Endothelial cell of umbilical vein (primary cell): ENCODE measurements at regions of chr11 and their contacts with region 1.

Region 1: DNA sequence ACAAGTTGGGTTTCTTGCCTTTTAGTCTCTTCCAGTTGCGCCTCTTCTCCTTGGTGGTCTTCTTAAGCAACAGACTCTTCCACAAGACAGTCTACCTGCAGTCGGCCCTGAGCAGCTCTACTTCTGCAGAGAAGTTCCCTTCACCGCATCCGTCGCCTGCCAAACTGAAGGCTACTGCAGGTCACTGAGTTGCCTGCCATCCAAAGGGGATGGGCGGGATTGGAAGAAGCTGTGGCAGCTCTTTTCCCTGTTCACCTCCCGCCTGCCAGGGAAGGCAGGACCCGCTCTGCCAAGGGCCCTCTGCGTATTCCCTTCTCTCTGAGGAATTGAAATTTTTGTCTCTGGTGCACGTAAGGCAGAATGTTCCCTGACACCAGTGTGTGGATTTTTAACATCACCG is 9.2 kb upstream of the STT3A start:
- DNase-seq: no peak
- H3K4me3 ChIP-seq: no peak overlapping the region
- H3K27ac ChIP-seq: no peak overlapping the region
- H3K4me1 ChIP-seq: peaks cover 4% of the 10 kb centered on the region
- H3K27me3 ChIP-seq: no peaks in the 10 kb centered on the region
- CTCF ChIP-seq: no peak
- POLR2A ChIP-seq: no peak

Region 2: DNA sequence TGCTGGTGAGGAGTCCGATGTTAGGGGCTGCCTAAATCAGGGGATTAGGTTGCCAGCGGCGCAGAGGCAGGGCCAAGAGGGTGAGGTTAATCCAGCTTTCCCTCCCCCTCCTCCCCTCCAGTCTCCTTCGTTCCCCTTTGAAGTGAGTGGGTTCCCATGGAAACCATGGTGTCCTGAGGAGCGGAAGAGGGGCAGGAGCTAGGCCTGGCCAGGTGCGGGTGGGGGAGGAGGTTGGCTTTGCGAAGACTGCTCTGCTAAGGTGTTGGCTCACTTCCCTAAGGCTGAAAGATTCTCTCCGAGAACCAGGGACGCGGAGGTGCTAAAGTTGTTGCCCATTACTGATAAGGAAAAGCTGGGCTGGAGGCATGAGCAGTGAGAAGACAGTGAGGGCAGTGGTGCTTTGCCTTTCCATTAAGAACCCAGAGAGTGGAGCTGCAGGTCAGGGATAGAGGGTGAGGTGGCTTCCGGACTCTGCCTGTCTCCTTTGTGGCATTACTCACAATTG is 212.0 kb before region 1 on chr11:
- CTCF ChIA-PET with region 1: no interaction called
- POLR2A ChIA-PET with region 1: no interaction called
- dilution Hi-C with region 1: no loop called
- intact Hi-C with region 1: no loop called
- DNase-seq: no peak
- H3K4me3 ChIP-seq: no peak overlapping the region
- H3K27ac ChIP-seq: no peak overlapping the region
- H3K4me1 ChIP-seq: no peaks in the 10 kb centered on the region
- H3K27me3 ChIP-seq: peaks cover 4 to 15% of the 10 kb centered on the region in 2 experiments
- CTCF ChIP-seq: no peak
- POLR2A ChIP-seq: no peak

Region 3: GRCh38 chr11:125525303-125525702 is 58.2 kb before region 1 on chr11:
- CTCF ChIA-PET with region 1: no interaction called
- POLR2A ChIA-PET with region 1: no interaction called
- dilution Hi-C with region 1: no loop called
- intact Hi-C with region 1: no loop called
- DNase-seq: no peak
- H3K4me3 ChIP-seq: no peak overlapping the region
- H3K27ac ChIP-seq: no peak overlapping the region
- H3K4me1 ChIP-seq: no peaks in the 10 kb centered on the region
- H3K27me3 ChIP-seq: no peaks in the 10 kb centered on the region
- CTCF ChIP-seq: no peak
- POLR2A ChIP-seq: no peak

Region 4: DNA sequence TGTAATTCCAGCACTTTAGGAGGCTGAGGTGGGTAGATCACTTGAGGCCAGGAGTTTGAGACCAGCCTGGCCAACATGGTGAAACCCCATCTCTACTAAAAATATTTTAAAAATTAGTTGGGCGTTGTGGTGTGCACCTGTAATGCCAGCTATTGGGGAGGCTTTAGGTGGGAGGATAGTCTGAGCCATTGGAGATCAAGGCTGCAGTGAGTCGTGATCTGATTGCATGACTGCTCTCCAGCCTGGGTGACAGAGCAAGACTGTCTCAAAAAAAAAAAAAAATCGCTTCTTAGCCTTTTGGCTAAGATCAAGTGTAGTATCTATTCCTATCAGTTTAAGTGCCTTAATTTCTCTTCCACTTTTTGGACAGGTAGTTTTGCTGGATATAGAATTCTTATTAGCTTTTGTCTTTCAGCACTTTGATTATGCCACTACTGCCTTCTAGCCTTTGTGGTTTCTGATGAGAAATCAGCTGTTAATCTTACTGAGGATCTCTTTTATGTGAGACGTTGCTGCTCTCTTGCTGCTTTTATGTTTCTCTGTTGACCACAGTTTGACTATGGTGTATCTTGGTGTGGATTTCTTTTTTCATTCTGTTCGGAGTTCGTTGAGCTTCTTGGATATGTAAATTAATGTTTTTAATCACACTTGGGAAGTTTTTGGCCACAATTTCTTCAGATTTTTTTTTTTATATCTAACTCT is 66.1 kb after region 1 on chr11:
- CTCF ChIA-PET with region 1: no interaction called
- POLR2A ChIA-PET with region 1: no interaction called
- dilution Hi-C with region 1: no loop called
- intact Hi-C with region 1: loop called (anchors 2 kb)
- DNase-seq: no peak
- H3K4me3 ChIP-seq: no peak overlapping the region
- H3K27ac ChIP-seq: no peak overlapping the region
- H3K4me1 ChIP-seq: no peaks in the 10 kb centered on the region
- H3K27me3 ChIP-seq: no peaks in the 10 kb centered on the region
- CTCF ChIP-seq: no peak
- POLR2A ChIP-seq: no peak